WTC11 (cell line): ENCODE measurements at regions of chr16 and their contacts with region 1.

Region 1: GRCh38 chr16:74226338-74226954 is 70.2 kb upstream of the PSMD7 start:
- DNase-seq: no peak
- ATAC-seq: peak; percentile 65
- H3K4me3 Mint-ChIP-seq: peak overlapping the region; percentile 47
- H3K27ac Mint-ChIP-seq: no peak overlapping the region
- H3K4me1 Mint-ChIP-seq: peaks cover 13% of the 10 kb centered on the region
- H3K27me3 Mint-ChIP-seq: no peaks in the 10 kb centered on the region
- CTCF ChIP-seq: no peak

Region 2: DNA sequence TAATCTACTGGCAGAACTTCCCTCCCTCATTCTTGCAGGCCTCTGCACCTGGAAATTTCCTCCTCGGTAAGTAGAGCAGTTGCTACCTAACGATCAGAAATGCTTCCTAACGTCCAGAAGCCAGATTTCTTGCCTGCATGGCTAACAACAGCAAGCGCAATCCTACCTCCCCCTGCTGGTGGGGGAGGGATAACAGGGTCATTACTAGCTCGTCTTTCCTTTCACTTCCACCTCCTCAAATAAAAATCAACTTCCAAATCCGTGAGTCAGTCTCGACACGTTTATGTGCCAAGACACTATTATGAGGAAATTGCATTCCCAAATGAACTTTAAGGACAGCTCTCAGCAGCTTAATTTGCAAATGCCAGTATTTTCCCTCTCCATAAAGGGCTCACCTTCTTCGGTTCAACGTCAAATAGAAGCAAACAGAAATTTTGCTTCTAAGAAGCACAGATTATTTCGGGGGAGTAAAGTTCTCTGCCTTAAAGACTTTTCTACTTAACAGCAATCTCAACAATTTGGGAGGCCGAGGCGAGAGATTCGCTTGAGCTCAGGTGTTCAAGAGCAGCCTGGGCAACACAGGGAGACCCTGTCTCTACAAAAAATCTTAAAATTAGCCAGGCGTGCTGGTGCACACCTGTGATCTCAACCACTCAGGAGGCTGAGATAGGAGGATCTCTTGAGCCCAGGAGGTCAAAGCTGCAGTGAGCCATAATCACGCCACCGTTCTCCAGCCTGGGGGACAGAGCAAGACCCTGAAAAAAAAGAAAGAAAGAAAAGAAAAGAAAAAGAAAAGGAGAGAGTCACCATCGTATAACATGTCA is 118.4 kb before region 1 on chr16:
- CTCF ChIA-PET with region 1: interaction called, 17 read pairs
- POLR2A ChIA-PET with region 1: no interaction called
- DNase-seq: peak; percentile 80
- ATAC-seq: peak; percentile 91
- H3K4me3 Mint-ChIP-seq: peak overlapping the region; percentile 21; the same call in 1 of the 2 replicates
- H3K27ac Mint-ChIP-seq: peak overlapping the region; percentile 66; the same call in 1 of the 2 replicates
- H3K4me1 Mint-ChIP-seq: peaks cover 15% of the 10 kb centered on the region
- H3K27me3 Mint-ChIP-seq: no peaks in the 10 kb centered on the region
- CTCF ChIP-seq: peak; percentile 79

Region 3: DNA sequence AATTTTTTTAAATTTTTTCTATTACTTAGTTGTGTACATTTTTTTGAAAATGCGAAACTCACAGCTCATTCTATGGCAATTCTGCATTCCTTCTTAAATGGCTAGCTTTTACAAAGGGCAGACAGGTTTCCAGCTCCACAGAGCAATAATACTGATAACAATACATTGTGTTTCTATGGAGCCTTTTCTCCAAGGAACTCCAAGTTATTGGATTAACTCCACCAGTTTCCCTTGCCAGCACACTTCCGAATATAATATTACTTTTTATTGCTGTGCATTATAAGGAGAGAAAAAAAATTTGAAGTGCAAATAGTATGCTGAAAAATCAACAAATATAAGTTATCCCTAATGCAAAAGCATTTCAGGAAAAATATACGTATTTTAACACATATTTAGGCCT is 57.4 kb before region 1 on chr16:
- CTCF ChIA-PET with region 1: no interaction called
- POLR2A ChIA-PET with region 1: no interaction called
- DNase-seq: no peak
- ATAC-seq: no peak
- H3K4me3 Mint-ChIP-seq: no peak overlapping the region
- H3K27ac Mint-ChIP-seq: no peak overlapping the region
- H3K4me1 Mint-ChIP-seq: no peaks in the 10 kb centered on the region
- H3K27me3 Mint-ChIP-seq: no peaks in the 10 kb centered on the region
- CTCF ChIP-seq: no peak

Region 4: DNA sequence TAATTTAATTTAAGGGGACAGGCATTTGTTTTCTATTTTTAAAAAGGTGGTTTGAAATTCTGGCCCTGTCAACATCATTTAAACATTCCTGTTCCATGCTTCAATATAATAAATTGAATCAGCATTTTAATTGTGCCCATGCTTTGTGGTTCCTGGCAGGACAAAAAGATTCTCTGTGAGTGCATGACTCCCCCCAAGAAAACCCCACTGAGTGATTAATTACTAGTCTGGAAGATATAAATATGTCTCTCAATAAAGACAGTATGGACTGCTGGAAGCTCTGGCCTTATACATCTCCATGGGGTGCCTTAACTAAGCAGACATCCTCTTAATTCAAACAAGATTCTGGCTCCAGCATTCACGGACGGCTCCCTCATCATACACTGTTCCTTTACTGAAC is 24.9 kb before region 1 on chr16:
- CTCF ChIA-PET with region 1: interaction called, 11 read pairs
- POLR2A ChIA-PET with region 1: no interaction called
- DNase-seq: no peak
- ATAC-seq: no peak
- H3K4me3 Mint-ChIP-seq: no peak overlapping the region
- H3K27ac Mint-ChIP-seq: no peak overlapping the region
- H3K4me1 Mint-ChIP-seq: no peaks in the 10 kb centered on the region
- H3K27me3 Mint-ChIP-seq: no peaks in the 10 kb centered on the region
- CTCF ChIP-seq: no peak

Region 5: GRCh38 chr16:74216319-74216718 is 10.1 kb before region 1 on chr16:
- CTCF ChIA-PET with region 1: interaction called, 12 read pairs
- POLR2A ChIA-PET with region 1: no interaction called
- DNase-seq: no peak
- ATAC-seq: no peak
- H3K4me3 Mint-ChIP-seq: no peak overlapping the region
- H3K27ac Mint-ChIP-seq: no peak overlapping the region
- H3K4me1 Mint-ChIP-seq: no peaks in the 10 kb centered on the region
- H3K27me3 Mint-ChIP-seq: no peaks in the 10 kb centered on the region
- CTCF ChIP-seq: no peak

Region 6: GRCh38 chr16:74275002-74275636 is 48.7 kb after region 1 on chr16:
- CTCF ChIA-PET with region 1: interaction called, 19 read pairs
- POLR2A ChIA-PET with region 1: no interaction called
- DNase-seq: no peak
- ATAC-seq: no peak
- H3K4me3 Mint-ChIP-seq: no peak overlapping the region
- H3K27ac Mint-ChIP-seq: no peak overlapping the region
- H3K4me1 Mint-ChIP-seq: peaks cover 21% of the 10 kb centered on the region
- H3K27me3 Mint-ChIP-seq: no peaks in the 10 kb centered on the region
- CTCF ChIP-seq: no peak